Activated CD4-positive, alpha-beta memory T cell treated with anti-CD3 and anti-CD28 coated beads for 36 hours (primary cell): ENCODE measurements at regions of chrX and their contacts with region 1.

Region 1: DNA sequence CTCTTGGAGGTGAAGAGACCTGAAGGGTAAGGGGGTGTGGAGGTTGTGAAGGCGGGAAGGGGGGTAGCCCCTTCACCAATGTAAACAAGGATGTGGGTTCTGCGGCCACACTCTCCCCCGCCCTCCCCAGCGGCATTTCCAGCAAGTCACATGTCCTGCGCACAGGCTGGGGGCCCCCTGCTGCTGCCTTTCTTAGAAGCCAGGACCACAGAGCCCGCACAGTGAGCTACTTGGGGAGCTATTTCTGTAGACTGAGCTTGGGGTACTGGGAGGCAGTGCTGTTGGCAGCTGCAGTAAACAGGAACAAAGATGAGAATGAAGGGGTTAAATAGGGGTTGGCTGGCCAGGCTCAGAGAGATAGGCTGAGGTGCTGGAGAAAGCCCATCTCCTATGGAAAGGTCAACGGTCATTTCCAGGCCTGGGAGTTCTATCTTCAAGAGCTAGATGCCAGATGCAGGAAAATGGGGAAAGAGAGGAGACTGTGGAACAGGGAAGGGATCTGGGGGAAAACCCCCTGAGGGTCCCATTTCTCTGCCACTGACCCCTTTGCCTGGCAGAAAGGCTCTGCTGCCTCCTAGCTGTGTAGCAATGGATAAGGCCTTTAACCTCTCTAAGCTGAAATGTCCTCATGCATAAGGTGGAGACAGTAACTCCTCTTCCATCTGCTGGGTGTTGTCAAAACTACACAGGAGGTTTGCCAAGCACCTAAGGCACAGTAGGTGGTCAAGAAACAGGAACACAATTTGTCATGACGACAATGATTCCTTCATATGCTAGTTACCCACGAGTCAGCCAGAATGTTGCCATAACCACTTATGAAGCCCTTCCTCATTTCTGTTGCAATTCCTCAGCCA is 18.5 kb upstream of the PIM2 start:
- DNase-seq: peak; percentile 95
- H3K4me3 Mint-ChIP-seq: peak overlapping the region; percentile 75
- H3K27ac Mint-ChIP-seq: peak overlapping the region; percentile 97
- H3K4me1 Mint-ChIP-seq: peaks cover 79% of the 10 kb centered on the region
- H3K27me3 Mint-ChIP-seq: no peaks in the 10 kb centered on the region

Region 2: GRCh38 chrX:48813644-48814043 is 123.6 kb before region 1 on chrX:
- CTCF ChIA-PET with region 1: no interaction called
- POLR2A ChIA-PET with region 1: no interaction called
- intact Hi-C with region 1: no loop called
- DNase-seq: no peak
- H3K4me3 Mint-ChIP-seq: no peak overlapping the region
- H3K27ac Mint-ChIP-seq: no peak overlapping the region
- H3K4me1 Mint-ChIP-seq: no peaks in the 10 kb centered on the region
- H3K27me3 Mint-ChIP-seq: no peaks in the 10 kb centered on the region

Region 3: GRCh38 chrX:48897621-48898306 is 39.5 kb before region 1 on chrX and contains the starts of genes PQBP1 and TIMM17B:
- CTCF ChIA-PET with region 1: interaction called, 4 read pairs
- POLR2A ChIA-PET with region 1: interaction called, 12 read pairs
- intact Hi-C with region 1: no loop called
- DNase-seq: peak; percentile 91
- H3K4me3 Mint-ChIP-seq: peak within 1 kb of the TSS; percentile 79
- H3K27ac Mint-ChIP-seq: peak within 1 kb of the TSS; percentile 88
- H3K4me1 Mint-ChIP-seq: peaks cover 16% of the 10 kb centered on the region
- H3K27me3 Mint-ChIP-seq: no peaks in the 10 kb centered on the region
- total RNA-seq, gene PQBP1: 85.0 to 85.5 TPM
- total RNA-seq, gene TIMM17B: 83.8 to 86.6 TPM

Region 4: DNA sequence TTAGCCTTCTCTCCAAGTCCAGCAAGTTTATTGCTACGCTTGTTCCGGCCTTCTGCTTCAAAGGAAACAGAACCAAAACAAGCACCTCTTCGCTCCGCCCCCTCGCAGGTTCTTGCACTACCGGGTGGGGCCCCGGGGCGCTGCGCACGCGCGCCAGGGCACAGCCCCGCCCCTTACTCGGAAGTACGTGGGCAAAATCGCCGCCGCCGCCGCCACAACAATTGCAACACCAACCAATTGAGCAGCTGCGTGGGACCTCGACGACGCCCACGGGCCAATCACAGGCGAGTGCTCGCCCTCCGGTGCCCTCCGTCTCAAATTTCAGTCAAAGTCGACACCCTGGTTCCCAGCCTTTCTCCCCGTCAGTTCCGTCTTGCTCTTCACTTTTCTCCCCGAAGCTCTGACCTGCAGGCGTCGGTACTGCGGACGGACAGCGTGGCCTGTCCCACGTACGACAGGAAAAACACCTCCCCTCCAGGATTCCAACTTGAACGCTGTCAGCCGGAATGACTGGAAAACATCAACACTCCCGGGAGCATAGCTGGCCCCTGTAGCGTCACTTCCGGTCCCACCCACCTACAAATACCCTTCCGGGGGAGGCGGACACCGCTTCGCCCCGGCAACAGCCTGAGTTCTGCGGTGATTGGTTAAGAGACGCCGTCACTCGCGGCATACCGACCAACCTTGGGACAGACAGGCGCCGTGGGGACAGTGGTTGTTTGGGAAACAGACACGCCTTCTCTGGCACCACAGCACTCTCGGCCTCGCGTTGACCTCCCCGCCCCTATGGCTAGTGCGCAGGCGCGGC is 20.8 kb after region 1 on chrX:
- CTCF ChIA-PET with region 1: interaction called, 3 read pairs
- POLR2A ChIA-PET with region 1: interaction called, 7 read pairs
- intact Hi-C with region 1: loop called (anchors 2 kb)
- DNase-seq: peak; percentile 95
- H3K4me3 Mint-ChIP-seq: peak overlapping the region; percentile 99
- H3K27ac Mint-ChIP-seq: peak overlapping the region; percentile 100
- H3K4me1 Mint-ChIP-seq: peaks cover 32% of the 10 kb centered on the region
- H3K27me3 Mint-ChIP-seq: no peaks in the 10 kb centered on the region